ENCODE measurements at regions of chr13 and their contacts with region 1.

Region 1: DNA sequence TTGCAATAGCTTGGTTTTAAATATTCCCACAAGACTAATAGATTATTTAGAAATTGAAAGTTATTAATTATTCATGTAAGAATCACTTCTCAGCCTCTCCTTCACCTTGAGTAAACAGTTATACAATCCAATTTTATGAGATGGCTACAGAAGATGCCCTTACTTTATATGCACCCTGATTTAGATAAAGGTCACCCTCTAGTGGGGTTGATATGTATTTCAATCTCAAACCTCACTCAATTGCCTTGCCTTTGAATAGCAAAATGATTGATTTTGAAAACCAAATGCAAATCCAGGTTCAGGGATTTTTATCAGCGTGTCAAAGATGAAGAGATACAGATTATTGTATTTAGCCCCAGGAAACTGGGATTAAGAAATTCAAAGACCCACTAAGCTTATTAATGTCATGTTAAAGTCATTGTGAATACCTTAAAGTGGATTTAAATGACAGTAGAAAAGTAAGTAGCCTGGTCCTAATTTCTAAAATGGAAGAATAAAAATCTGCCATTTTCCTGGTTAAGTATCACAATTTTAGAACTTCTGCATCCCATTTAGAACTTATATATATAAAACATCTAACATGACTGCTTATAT is 305.1 kb downstream of the ITGBL1 start:
- DNase-seq: peak; percentile 70
- ATAC-seq: peak; percentile 84
- H3K4me3 ChIP-seq: no peak overlapping the region
- H3K27ac ChIP-seq: no peak overlapping the region
- H3K4me1 ChIP-seq: peaks cover 10% of the 10 kb centered on the region
- H3K27me3 ChIP-seq: no peaks in the 10 kb centered on the region
- CTCF ChIP-seq: peak; percentile 68

Region 2: GRCh38 chr13:101144808-101145419 is 612.6 kb before region 1 on chr13:
- CTCF ChIA-PET with region 1: interaction called, 4 read pairs
- POLR2A ChIA-PET with region 1: interaction called, 5 read pairs
- intact Hi-C with region 1: loop called (anchors 1 kb)
- DNase-seq: peak; percentile 74
- ATAC-seq: peak; percentile 68
- H3K4me3 ChIP-seq: no peak overlapping the region
- H3K27ac ChIP-seq: no peak overlapping the region
- H3K4me1 ChIP-seq: peaks cover 22% of the 10 kb centered on the region
- H3K27me3 ChIP-seq: no peaks in the 10 kb centered on the region
- CTCF ChIP-seq: peak; percentile 70

Region 3: DNA sequence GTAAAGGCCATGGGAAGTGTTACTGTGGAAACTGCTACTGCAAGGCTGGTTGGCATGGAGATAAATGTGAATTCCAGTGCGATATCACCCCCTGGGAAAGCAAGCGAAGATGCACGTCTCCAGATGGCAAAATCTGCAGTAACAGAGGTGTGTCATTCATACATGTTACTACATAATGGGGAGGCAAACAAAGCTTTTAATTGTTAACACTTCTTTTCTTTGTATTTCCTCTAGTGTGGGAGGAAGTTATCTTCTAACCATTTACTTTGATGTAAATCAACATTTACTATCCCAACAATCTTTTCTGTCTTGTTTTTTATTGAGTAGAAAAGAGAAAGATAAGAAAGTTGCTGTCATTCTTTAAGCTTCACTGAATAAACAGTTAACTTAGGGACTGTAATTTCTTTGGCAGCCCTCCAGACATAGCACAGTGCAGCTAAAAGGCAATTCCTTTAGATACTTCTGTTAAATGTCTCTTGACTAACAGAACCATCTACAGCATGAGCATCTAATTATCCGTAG is 178.2 kb before region 1 on chr13:
- CTCF ChIA-PET with region 1: no interaction called
- POLR2A ChIA-PET with region 1: no interaction called
- intact Hi-C with region 1: loop called (anchors 5 kb)
- DNase-seq: peak; percentile 31
- ATAC-seq: no peak
- H3K4me3 ChIP-seq: no peak overlapping the region
- H3K27ac ChIP-seq: no peak overlapping the region
- H3K4me1 ChIP-seq: peaks cover 32% of the 10 kb centered on the region
- H3K27me3 ChIP-seq: no peaks in the 10 kb centered on the region
- CTCF ChIP-seq: no peak

Region 4: DNA sequence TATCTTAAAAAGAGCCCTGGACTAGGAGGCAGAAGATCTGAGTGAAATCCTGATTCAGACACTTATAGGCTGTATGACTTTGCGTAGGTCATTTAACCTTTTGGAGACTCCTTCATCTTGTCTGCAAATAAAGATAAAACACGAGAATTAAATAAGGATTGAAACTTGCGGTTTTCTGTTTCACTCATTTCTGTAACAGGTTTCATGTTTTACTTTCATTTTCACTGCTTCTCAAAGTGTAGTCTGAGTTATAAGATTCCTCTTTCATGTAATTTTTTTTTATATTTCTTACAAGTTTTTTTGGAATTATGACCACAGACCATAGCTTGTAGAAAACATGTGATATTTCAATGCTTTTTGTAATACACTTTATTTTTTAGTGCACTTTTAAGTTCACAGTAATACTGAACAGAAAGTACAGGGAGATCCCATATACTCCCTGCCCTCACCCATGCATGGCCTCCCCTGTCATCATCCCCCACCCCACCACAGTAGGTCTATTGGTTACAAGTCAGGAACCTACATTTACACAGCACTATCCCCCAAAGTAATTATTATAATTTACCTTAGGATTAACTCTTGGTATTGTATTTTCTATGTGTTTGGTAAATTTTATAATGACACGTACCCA is 130.5 kb before region 1 on chr13:
- CTCF ChIA-PET with region 1: no interaction called
- POLR2A ChIA-PET with region 1: no interaction called
- intact Hi-C with region 1: loop called (anchors 5 kb)
- DNase-seq: peak; percentile 7
- ATAC-seq: peak; percentile 25
- H3K4me3 ChIP-seq: peak overlapping the region; percentile 64
- H3K27ac ChIP-seq: peak overlapping the region; percentile 76
- H3K4me1 ChIP-seq: peaks cover 52% of the 10 kb centered on the region
- H3K27me3 ChIP-seq: no peaks in the 10 kb centered on the region
- CTCF ChIP-seq: no peak

Region 5: GRCh38 chr13:101649490-101650126 is 107.9 kb before region 1 on chr13:
- CTCF ChIA-PET with region 1: no interaction called
- POLR2A ChIA-PET with region 1: no interaction called
- intact Hi-C with region 1: loop called (anchors 5 kb)
- DNase-seq: peak; percentile 88
- ATAC-seq: peak; percentile 98
- H3K4me3 ChIP-seq: peak overlapping the region; percentile 58
- H3K27ac ChIP-seq: peak overlapping the region; percentile 68
- H3K4me1 ChIP-seq: peaks cover 27% of the 10 kb centered on the region
- H3K27me3 ChIP-seq: no peaks in the 10 kb centered on the region
- CTCF ChIP-seq: no peak

Region 6: DNA sequence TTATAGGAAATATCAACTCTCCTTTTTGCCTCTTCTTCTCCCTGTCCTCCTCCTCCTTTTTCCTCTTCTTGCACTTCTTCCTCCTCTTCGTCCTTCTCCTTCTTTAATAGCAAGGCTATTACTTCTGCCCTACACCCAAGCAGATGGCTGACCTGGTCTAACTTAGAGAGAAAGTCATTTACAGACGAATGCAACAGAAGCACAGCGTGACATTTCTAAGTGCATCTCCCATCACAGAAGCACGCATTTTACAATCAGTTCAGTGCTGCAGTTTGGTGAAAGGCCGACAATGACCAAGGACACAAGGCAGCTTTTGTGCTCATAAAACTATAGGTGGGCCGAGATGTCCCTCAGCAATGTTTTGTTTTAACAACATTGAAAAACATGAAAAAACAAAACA is 412.8 kb after region 1 on chr13:
- CTCF ChIA-PET with region 1: no interaction called
- POLR2A ChIA-PET with region 1: no interaction called
- intact Hi-C with region 1: no loop called
- DNase-seq: no peak
- ATAC-seq: no peak
- H3K4me3 ChIP-seq: no peak overlapping the region
- H3K27ac ChIP-seq: no peak overlapping the region
- H3K4me1 ChIP-seq: no peaks in the 10 kb centered on the region
- H3K27me3 ChIP-seq: peaks cover 31% of the 10 kb centered on the region
- CTCF ChIP-seq: no peak